H1 (cell line): ENCODE measurements at regions of chr11 and their contacts with region 1.

Region 1: GRCh38 chr11:64185816-64186498 is at the start of gene STIP1:
- DNase-seq: peak; percentile 99 to 100
- H3K4me3 ChIP-seq: peak within 1 kb of the TSS; percentile 55 to 87 (median 77)
- H3K27ac ChIP-seq: peak within 1 kb of the TSS; percentile 87
- H3K4me1 ChIP-seq: peaks cover 0 to 9% (median 4%) of the 10 kb centered on the region in 4 experiments; a peak in 6 of 7 replicates
- H3K27me3 ChIP-seq: no peaks in the 10 kb centered on the region
- CTCF ChIP-seq: peak; percentile 35 to 50 (median 42)
- EP300 ChIP-seq: 0 out of 3 replicates have a peak, but pooled peaks of 1 of the 2 experiments have one; percentile 9
- POLR2A ChIP-seq: peak in 1 of 2 experiments; percentile 47; a peak in 2 of 3 replicates
- RAD21 ChIP-seq: peak in 1 of 2 experiments; percentile 23; a peak in 1 of 4 replicates
- total RNA-seq, gene STIP1: 316 and 329 TPM in 2 replicates

Region 2: GRCh38 chr11:64074239-64074638 is 111.7 kb before region 1 on chr11:
- CTCF ChIA-PET with region 1: no interaction called
- POLR2A ChIA-PET with region 1: no interaction called
- DNase-seq: no peak
- H3K4me3 ChIP-seq: no peak overlapping the region
- H3K27ac ChIP-seq: no peak overlapping the region
- H3K4me1 ChIP-seq: peaks cover 0 to 5% (median 0%) of the 10 kb centered on the region in 4 experiments; a peak in 1 of 7 replicates
- H3K27me3 ChIP-seq: peaks cover 2 to 78% (median 50%) of the 10 kb centered on the region in 4 experiments
- CTCF ChIP-seq: no peak
- EP300 ChIP-seq: no peak
- POLR2A ChIP-seq: no peak
- RAD21 ChIP-seq: no peak

Region 3: GRCh38 chr11:64138398-64138797 is 47.6 kb before region 1 on chr11:
- CTCF ChIA-PET with region 1: no interaction called
- POLR2A ChIA-PET with region 1: no interaction called
- DNase-seq: no peak
- H3K4me3 ChIP-seq: no peak overlapping the region
- H3K27ac ChIP-seq: no peak overlapping the region
- H3K4me1 ChIP-seq: no peaks in the 10 kb centered on the region; a peak in 1 of 7 replicates
- H3K27me3 ChIP-seq: peaks cover 0 to 63% (median 24%) of the 10 kb centered on the region in 4 experiments; a peak in 6 of 7 replicates
- CTCF ChIP-seq: no peak
- EP300 ChIP-seq: no peak
- POLR2A ChIP-seq: no peak
- RAD21 ChIP-seq: no peak

Region 4: GRCh38 chr11:64173616-64174355 is 12.2 kb before region 1 on chr11:
- CTCF ChIA-PET with region 1: interaction called, 3 read pairs
- POLR2A ChIA-PET with region 1: interaction called, 29 read pairs
- DNase-seq: no peak
- H3K4me3 ChIP-seq: no peak overlapping the region
- H3K27ac ChIP-seq: no peak overlapping the region
- H3K4me1 ChIP-seq: no peaks in the 10 kb centered on the region
- H3K27me3 ChIP-seq: no peaks in the 10 kb centered on the region
- CTCF ChIP-seq: no peak
- EP300 ChIP-seq: no peak
- POLR2A ChIP-seq: no peak
- RAD21 ChIP-seq: no peak

Region 5: DNA sequence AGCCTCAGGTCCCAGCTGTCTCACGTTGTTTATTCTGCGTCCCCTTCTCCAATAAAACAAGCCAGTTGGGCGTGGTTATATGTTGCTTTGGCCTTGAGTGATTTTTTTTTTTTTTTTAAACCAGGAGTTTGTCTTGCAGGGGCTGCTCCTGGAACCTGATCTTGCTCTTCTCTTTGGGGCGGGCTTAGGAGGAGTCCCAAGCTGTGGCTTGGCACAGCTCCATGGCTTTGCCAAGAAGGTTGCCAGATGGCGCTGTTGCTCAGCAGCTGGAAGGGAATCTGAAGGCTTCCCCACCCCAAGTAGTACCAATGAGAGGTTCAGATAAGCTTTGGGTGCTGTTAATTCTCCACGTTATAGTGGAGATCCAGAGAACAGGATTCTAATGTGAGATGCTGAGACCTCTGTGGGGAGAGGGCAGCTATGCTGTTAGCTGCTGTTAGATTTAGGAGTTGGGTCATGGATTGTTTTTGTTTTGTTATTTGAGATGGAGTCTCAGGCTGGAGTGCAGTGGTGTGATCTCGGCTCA is 18.6 kb after region 1 on chr11:
- CTCF ChIA-PET with region 1: interaction called, 30 read pairs
- POLR2A ChIA-PET with region 1: interaction called, 186 read pairs
- DNase-seq: peak; percentile 53 to 80
- H3K4me3 ChIP-seq: no peak overlapping the region
- H3K27ac ChIP-seq: no peak overlapping the region
- H3K4me1 ChIP-seq: peaks cover 0 to 5% (median 0%) of the 10 kb centered on the region in 4 experiments; a peak in 3 of 7 replicates
- H3K27me3 ChIP-seq: no peaks in the 10 kb centered on the region; a peak in 1 of 7 replicates
- CTCF ChIP-seq: peak; percentile 79 to 90 (median 81)
- EP300 ChIP-seq: no peak
- POLR2A ChIP-seq: no peak
- RAD21 ChIP-seq: peak; percentile 80 to 88

Region 6: GRCh38 chr11:64225612-64226506 is 39.9 kb after region 1 on chr11 and contains the starts of genes NUDT22 and TRPT1:
- CTCF ChIA-PET with region 1: interaction called, 4 read pairs
- POLR2A ChIA-PET with region 1: interaction called, 48 read pairs
- DNase-seq: peak in 1 of 2 experiments; percentile 97
- H3K4me3 ChIP-seq: peak within 1 kb of the TSS; percentile 63 to 90 (median 84)
- H3K27ac ChIP-seq: peak within 1 kb of the TSS; percentile 11; the same call in 1 of the 2 replicates
- H3K4me1 ChIP-seq: peaks cover 0 to 23% (median 14%) of the 10 kb centered on the region in 4 experiments; a peak in 6 of 7 replicates
- H3K27me3 ChIP-seq: no peaks in the 10 kb centered on the region
- CTCF ChIP-seq: peak in 1 of 3 experiments; percentile 48; a peak in 1 of 4 replicates
- EP300 ChIP-seq: no peak
- POLR2A ChIP-seq: peak in 1 of 2 experiments; percentile 44; a peak in 2 of 3 replicates
- RAD21 ChIP-seq: no peak; a peak in 2 of 4 replicates
- total RNA-seq, gene NUDT22: 43.4 and 51.5 TPM in 2 replicates
- total RNA-seq, gene TRPT1: 34.5 and 39.7 TPM in 2 replicates

Region 7: DNA sequence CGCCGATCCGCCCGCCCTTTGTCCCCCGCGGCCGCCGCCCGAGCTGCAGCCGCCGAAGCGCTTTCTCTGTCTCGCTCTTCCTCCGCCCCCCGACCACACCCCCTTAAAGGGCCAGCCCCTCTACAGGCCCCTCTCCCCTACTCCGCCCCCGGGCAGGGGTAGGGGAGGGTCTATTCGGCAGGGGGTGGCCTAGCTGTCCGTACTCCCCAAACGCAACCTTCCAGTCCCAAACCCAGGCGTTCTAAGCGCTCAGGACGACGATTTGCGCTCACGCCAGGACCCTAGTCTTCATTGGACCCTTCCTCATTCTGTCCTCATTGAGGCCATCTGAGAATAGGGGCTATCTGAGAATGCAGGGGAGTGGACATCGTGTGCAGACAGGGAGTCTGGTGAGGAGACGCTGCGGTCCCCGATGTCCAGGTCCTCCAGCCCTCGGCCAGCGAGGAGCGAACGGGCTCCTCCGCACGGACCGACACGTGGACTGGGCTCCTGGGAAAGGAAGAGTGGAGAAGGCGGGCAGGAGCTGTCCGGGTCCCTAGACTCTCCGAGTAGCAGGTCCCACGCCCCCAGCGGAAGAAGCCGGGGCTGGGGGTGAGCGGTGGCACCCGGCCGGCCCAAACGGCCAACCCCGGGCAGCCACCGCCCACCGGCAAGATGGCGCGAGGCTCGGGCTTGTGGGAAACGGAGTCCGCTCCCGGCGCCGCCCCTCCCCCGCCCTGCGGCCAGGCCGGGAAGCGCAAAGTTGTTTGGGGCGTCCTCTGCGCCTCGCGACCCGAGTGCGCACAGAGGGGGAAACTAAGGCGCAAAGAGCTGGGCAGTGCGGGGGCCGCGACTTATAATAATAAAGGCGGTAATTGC is 61.1 kb after region 1 on chr11 and contains the start of gene PPP1R14B:
- CTCF ChIA-PET with region 1: interaction called, 6 read pairs
- POLR2A ChIA-PET with region 1: interaction called, 31 read pairs
- DNase-seq: peak in 1 of 2 experiments; percentile 94
- H3K4me3 ChIP-seq: peak within 1 kb of the TSS; percentile 56 to 99 (median 90)
- H3K27ac ChIP-seq: peak within 1 kb of the TSS; percentile 61
- H3K4me1 ChIP-seq: peaks cover 0 to 48% (median 35%) of the 10 kb centered on the region in 4 experiments; a peak in 6 of 7 replicates
- H3K27me3 ChIP-seq: no peaks in the 10 kb centered on the region
- CTCF ChIP-seq: peak in 1 of 3 experiments; percentile 12; a peak in 1 of 4 replicates
- EP300 ChIP-seq: no peak
- POLR2A ChIP-seq: no peak
- RAD21 ChIP-seq: no peak
- total RNA-seq, gene PPP1R14B: 418 and 419 TPM in 2 replicates